ENCODE measurements at regions of chr14 and their contacts with region 1.

Region 1: GRCh38 chr14:65604936-65605335 is 192.4 kb downstream of the FUT8 start:
- DNase-seq: no peak
- H3K4me3 ChIP-seq: no peak overlapping the region
- H3K27ac ChIP-seq: no peak overlapping the region
- H3K4me1 ChIP-seq: peaks cover 11% of the 10 kb centered on the region
- CTCF ChIP-seq: peak; percentile 45; the same call in 1 of the 2 replicates

Region 2: GRCh38 chr14:65035049-65035448 is 569.9 kb before region 1 on chr14:
- CTCF ChIA-PET with region 1: no interaction called
- POLR2A ChIA-PET with region 1: no interaction called
- intact Hi-C with region 1: no loop called
- DNase-seq: no peak
- H3K4me3 ChIP-seq: no peak overlapping the region
- H3K27ac ChIP-seq: no peak overlapping the region
- H3K4me1 ChIP-seq: no peaks in the 10 kb centered on the region
- CTCF ChIP-seq: no peak

Region 3: DNA sequence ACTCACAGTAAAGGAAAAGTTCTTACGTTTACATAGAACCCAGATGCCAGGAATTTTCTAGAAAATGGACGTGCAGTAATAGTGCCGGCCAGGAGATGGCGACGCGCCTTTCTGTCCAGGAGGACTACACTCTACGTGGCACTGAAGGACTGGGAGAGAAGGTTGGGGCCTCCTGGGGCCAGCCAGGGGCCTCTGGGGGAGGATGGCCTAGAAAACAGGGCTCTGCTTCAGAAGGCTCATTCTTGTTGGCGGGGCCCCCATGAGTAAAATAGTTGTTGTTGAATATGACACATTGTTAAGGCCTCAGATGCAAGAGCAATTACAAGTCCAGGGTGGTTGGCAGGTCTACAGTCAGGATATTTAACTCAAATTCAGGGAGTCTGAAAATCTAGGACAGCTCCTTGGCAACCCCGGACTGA is 382.5 kb before region 1 on chr14:
- CTCF ChIA-PET with region 1: no interaction called
- POLR2A ChIA-PET with region 1: no interaction called
- intact Hi-C with region 1: loop called (anchors 10 kb)
- DNase-seq: peak; percentile 77
- H3K4me3 ChIP-seq: no peak overlapping the region
- H3K27ac ChIP-seq: no peak overlapping the region
- H3K4me1 ChIP-seq: peaks cover 50% of the 10 kb centered on the region
- CTCF ChIP-seq: peak; percentile 99

Region 4: GRCh38 chr14:65281991-65282895 is 322.7 kb before region 1 on chr14:
- CTCF ChIA-PET with region 1: no interaction called
- POLR2A ChIA-PET with region 1: no interaction called
- intact Hi-C with region 1: loop called (anchors 10 kb)
- DNase-seq: peak; percentile 58
- H3K4me3 ChIP-seq: peak overlapping the region; percentile 34
- H3K27ac ChIP-seq: peak overlapping the region; percentile 51
- H3K4me1 ChIP-seq: peaks cover 55% of the 10 kb centered on the region
- CTCF ChIP-seq: no peak

Measured in OCI-LY7 (cell line).